ENCODE measurements at regions of chr3 and their contacts with region 1.

Region 1: GRCh38 chr3:112519424-112520001 is 20.2 kb upstream of the BTLA start:
- DNase-seq: no peak
- H3K4me3 ChIP-seq: no peak overlapping the region
- H3K27ac ChIP-seq: no peak overlapping the region
- H3K4me1 ChIP-seq: no peaks in the 10 kb centered on the region
- H3K27me3 ChIP-seq: no peaks in the 10 kb centered on the region
- CTCF ChIP-seq: peak; percentile 70 to 75 (median 70)

Region 2: GRCh38 chr3:112327371-112327951 is 192.1 kb before region 1 on chr3:
- intact Hi-C with region 1: loop called (anchors 1 kb)
- DNase-seq: no peak
- H3K4me3 ChIP-seq: no peak overlapping the region
- H3K27ac ChIP-seq: no peak overlapping the region
- H3K4me1 ChIP-seq: no peaks in the 10 kb centered on the region
- H3K27me3 ChIP-seq: no peaks in the 10 kb centered on the region
- CTCF ChIP-seq: peak; percentile 58 to 80 (median 80)

Region 3: DNA sequence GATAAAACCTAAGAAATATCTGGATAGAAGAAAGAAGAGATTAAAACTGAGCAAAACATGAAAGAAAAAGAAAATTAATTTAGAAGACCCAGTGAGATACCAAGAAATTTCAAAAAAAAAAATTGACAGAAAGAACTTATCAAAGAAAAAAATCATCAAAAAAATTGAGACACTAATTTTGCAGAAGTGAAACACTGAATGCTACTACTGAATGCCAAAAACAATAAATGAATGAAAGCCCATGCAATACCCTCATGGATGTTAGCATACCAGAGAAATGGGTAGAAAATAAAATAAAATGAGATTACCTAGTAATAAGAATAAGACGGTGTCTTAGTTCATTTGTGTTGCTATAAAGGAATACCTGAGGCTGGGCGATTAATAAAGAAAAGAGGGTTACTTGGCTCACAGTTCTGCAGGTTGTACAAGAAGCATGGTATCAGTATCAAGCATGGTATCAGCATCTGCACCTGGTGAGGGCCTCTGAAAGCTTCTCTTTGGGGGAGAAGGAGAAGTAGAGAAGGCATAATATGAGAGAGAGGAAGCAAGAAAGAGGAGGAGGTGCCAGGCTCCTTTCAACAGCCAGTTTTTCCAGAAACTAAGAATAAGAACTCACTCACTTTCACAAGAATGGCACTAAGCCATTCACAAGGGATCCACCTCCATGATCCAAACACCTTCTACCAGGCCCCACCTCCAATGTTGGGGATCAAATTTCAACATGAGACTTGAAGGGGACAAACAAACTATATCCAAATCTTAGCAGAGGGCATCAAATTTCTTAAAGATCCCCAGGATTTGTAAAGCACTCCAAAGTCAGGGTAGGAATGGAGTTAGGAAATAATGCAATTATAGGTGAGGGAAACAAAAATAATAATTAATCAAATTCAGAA is 93.4 kb before region 1 on chr3:
- intact Hi-C with region 1: loop called (anchors 5 kb)
- DNase-seq: no peak
- H3K4me3 ChIP-seq: no peak overlapping the region
- H3K27ac ChIP-seq: no peak overlapping the region
- H3K4me1 ChIP-seq: peaks cover 0 to 6% of the 10 kb centered on the region in 2 donors
- H3K27me3 ChIP-seq: no peaks in the 10 kb centered on the region
- CTCF ChIP-seq: no peak